Calu3 (cell line): ENCODE measurements at regions of chr4 and their contacts with region 1.

Region 1: GRCh38 chr4:118034053-118034785 is at the start of gene NDST3:
- DNase-seq: peak; percentile 68
- H3K4me3 Mint-ChIP-seq: peak within 1 kb of the TSS; percentile 64
- H3K27ac Mint-ChIP-seq: no peak within 1 kb of the TSS
- H3K4me1 Mint-ChIP-seq: no peaks in the 10 kb centered on the region
- H3K27me3 Mint-ChIP-seq: no peaks in the 10 kb centered on the region
- CTCF ChIP-seq: peak; percentile 36
- total RNA-seq, gene NDST3: 0.12 and 0.15 TPM in 2 replicates

Region 2: GRCh38 chr4:116180157-116180601 is 1854.0 kb before region 1 on chr4:
- CTCF ChIA-PET with region 1: interaction called, 3 read pairs
- intact Hi-C with region 1: loop called (anchors 5 kb)
- DNase-seq: peak; percentile 2
- H3K4me3 Mint-ChIP-seq: no peak overlapping the region
- H3K27ac Mint-ChIP-seq: no peak overlapping the region
- H3K4me1 Mint-ChIP-seq: no peaks in the 10 kb centered on the region
- H3K27me3 Mint-ChIP-seq: no peaks in the 10 kb centered on the region
- CTCF ChIP-seq: peak; percentile 22

Region 3: GRCh38 chr4:116839826-116840225 is 1194.4 kb before region 1 on chr4:
- CTCF ChIA-PET with region 1: no interaction called
- intact Hi-C with region 1: no loop called
- DNase-seq: no peak
- H3K4me3 Mint-ChIP-seq: no peak overlapping the region
- H3K27ac Mint-ChIP-seq: no peak overlapping the region
- H3K4me1 Mint-ChIP-seq: no peaks in the 10 kb centered on the region
- H3K27me3 Mint-ChIP-seq: no peaks in the 10 kb centered on the region
- CTCF ChIP-seq: no peak

Region 4: GRCh38 chr4:117134386-117134785 is 899.8 kb before region 1 on chr4:
- CTCF ChIA-PET with region 1: interaction called, 5 read pairs
- intact Hi-C with region 1: loop called (anchors 1 kb)
- DNase-seq: peak; percentile 41
- H3K4me3 Mint-ChIP-seq: no peak overlapping the region
- H3K27ac Mint-ChIP-seq: no peak overlapping the region
- H3K4me1 Mint-ChIP-seq: peaks cover 20% of the 10 kb centered on the region
- H3K27me3 Mint-ChIP-seq: no peaks in the 10 kb centered on the region
- CTCF ChIP-seq: peak; percentile 45

Region 5: GRCh38 chr4:117771647-117772337 is 262.4 kb before region 1 on chr4:
- CTCF ChIA-PET with region 1: no interaction called
- intact Hi-C with region 1: loop called (anchors 10 kb)
- DNase-seq: peak; percentile 3
- H3K4me3 Mint-ChIP-seq: no peak overlapping the region
- H3K27ac Mint-ChIP-seq: no peak overlapping the region
- H3K4me1 Mint-ChIP-seq: no peaks in the 10 kb centered on the region
- H3K27me3 Mint-ChIP-seq: no peaks in the 10 kb centered on the region
- CTCF ChIP-seq: no peak

Region 6: GRCh38 chr4:118180776-118181175 is 146.6 kb after region 1 on chr4:
- CTCF ChIA-PET with region 1: no interaction called
- intact Hi-C with region 1: no loop called
- DNase-seq: no peak
- H3K4me3 Mint-ChIP-seq: no peak overlapping the region
- H3K27ac Mint-ChIP-seq: no peak overlapping the region
- H3K4me1 Mint-ChIP-seq: peaks cover 5% of the 10 kb centered on the region
- H3K27me3 Mint-ChIP-seq: no peaks in the 10 kb centered on the region
- CTCF ChIP-seq: no peak

Region 7: GRCh38 chr4:118270492-118270891 is 236.3 kb after region 1 on chr4:
- CTCF ChIA-PET with region 1: no interaction called
- intact Hi-C with region 1: loop called (anchors 5 kb)
- DNase-seq: no peak
- H3K4me3 Mint-ChIP-seq: no peak overlapping the region
- H3K27ac Mint-ChIP-seq: no peak overlapping the region
- H3K4me1 Mint-ChIP-seq: no peaks in the 10 kb centered on the region
- H3K27me3 Mint-ChIP-seq: no peaks in the 10 kb centered on the region
- CTCF ChIP-seq: no peak